ENCODE measurements at regions of chr5 and their contacts with region 1.

Region 1: DNA sequence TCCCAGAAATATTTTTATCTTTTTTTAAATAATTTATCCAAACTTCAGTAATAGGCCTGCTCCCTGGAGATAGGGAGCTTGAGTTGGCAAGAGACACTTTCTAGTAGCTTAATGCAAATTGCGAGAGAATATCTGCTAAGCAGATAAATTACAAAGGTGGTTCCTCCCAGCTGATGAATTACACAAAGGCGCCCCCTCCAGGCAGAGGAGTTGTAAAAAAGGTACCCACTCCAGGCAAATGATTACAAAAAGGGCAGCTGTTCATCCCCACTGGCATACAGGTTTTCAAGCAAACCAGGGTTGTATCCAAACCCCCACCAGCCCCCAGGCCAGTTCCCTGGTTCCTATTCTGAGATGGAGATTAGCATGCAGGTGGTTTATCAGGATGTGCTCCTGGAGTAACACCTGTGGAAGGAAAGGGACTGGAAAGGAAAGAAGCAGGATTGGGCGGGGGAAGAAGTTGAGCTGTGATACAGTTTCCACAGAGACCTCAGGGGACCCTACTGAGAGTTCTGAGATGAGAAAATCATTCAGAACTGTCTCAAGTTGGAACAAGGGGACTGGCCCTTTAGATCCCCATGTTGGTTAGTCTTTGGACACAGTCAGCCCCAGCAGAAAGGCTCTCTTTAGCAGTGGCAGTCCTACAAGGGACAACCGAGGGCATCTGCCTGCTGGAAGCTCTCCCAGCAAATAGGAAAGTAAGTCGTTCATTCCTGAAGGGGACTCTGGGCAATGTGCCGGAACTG is 25.5 kb downstream of the ESM1 start:
- DNase-seq: peak; percentile 7 to 76
- H3K4me3 ChIP-seq: no peak overlapping the region
- H3K27ac ChIP-seq: no peak overlapping the region
- H3K4me1 ChIP-seq: no peaks in the 10 kb centered on the region
- H3K27me3 ChIP-seq: no peaks in the 10 kb centered on the region
- CTCF ChIP-seq: peak; percentile 10 to 63 (median 57)
- EP300 ChIP-seq: no peak
- POLR2A ChIP-seq: no peak
- RAD21 ChIP-seq: peak; percentile 54 to 69

Region 2: GRCh38 chr5:54915466-54916027 is 44.3 kb before region 1 on chr5:
- CTCF ChIA-PET with region 1: interaction called, 16 read pairs
- POLR2A ChIA-PET with region 1: no interaction called
- DNase-seq: no peak
- H3K4me3 ChIP-seq: no peak overlapping the region
- H3K27ac ChIP-seq: no peak overlapping the region
- H3K4me1 ChIP-seq: no peaks in the 10 kb centered on the region
- H3K27me3 ChIP-seq: no peaks in the 10 kb centered on the region
- CTCF ChIP-seq: no peak
- EP300 ChIP-seq: no peak
- POLR2A ChIP-seq: no peak
- RAD21 ChIP-seq: no peak

Region 3: DNA sequence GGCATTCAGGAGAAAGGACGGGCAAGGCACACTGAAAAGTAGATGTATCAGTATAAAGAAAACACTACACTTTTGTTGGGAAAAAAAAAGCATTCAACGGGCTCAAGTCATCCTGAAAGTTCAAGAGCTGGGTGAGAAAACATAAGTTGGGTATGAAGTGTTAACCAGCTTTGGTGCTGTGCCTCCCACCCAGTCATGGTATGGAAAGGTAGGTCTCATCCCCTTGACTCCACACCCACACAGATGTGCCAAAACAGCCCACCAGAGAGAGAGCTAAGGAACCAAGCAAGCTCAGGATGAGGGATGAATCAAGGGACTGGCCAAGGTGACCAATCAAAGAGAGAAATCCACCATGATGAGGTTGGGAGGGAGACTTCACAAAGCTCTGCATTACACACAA is 29.1 kb before region 1 on chr5:
- CTCF ChIA-PET with region 1: interaction called, 22 read pairs
- POLR2A ChIA-PET with region 1: no interaction called
- DNase-seq: no peak
- H3K4me3 ChIP-seq: no peak overlapping the region
- H3K27ac ChIP-seq: no peak overlapping the region
- H3K4me1 ChIP-seq: no peaks in the 10 kb centered on the region
- H3K27me3 ChIP-seq: peaks cover 0 to 1% (median 0%) of the 10 kb centered on the region in 4 experiments; a peak in 1 of 7 replicates
- CTCF ChIP-seq: no peak
- EP300 ChIP-seq: no peak
- POLR2A ChIP-seq: no peak
- RAD21 ChIP-seq: no peak

Region 4: GRCh38 chr5:54944364-54944763 is 15.5 kb before region 1 on chr5:
- CTCF ChIA-PET with region 1: interaction called, 144 read pairs
- POLR2A ChIA-PET with region 1: no interaction called
- DNase-seq: no peak
- H3K4me3 ChIP-seq: no peak overlapping the region
- H3K27ac ChIP-seq: no peak overlapping the region
- H3K4me1 ChIP-seq: no peaks in the 10 kb centered on the region
- H3K27me3 ChIP-seq: no peaks in the 10 kb centered on the region
- CTCF ChIP-seq: peak in 2 of 3 experiments; percentile 24 to 51; a peak in 2 of 4 replicates
- EP300 ChIP-seq: no peak
- POLR2A ChIP-seq: no peak
- RAD21 ChIP-seq: peak; percentile 34 to 38; a peak in 3 of 4 replicates

Region 5: DNA sequence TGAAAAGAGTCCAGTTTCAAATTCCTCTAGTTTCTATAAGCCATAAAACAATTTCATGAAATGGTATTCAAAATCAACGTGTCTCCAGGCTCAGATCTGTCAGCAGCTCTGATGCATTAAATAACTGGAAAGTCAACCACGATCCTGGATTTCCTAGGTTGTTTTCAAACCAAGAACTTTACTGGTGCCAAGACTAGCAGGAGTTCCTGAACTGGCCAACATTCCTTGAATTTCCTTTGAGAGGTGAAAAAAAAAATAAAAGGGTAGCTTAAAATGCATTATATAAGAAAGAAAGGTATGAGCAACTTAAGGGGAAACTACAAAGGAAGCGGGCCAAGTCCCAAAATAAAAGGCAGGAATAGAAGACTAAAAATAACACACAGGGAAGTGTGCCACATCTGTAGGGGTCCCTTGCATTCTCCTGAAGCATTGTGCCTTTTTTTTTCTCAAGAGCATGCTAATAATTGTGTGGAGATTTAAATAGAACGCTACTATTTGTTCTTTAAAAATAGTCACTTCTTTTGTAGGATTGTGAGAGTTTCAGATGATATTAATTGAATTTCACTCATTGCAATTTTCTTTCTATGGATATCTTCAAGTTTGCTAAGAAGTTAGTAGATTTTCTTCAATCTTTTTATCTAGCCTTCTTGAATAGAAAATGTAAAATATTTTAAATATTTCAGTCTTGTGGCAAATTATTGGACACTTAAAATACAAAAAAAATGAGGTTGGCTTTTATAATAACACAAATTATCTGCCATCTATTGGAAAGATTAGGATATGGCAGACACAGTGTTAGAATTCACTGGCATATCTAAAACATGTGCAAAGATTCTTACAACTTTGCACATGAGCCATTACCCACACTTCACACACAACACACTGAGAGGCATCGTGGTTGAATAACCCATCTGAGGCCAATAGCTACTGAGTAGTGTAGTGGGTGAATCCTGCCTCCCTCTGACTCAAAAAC is 10.3 kb after region 1 on chr5:
- CTCF ChIA-PET with region 1: interaction called, 57 read pairs
- POLR2A ChIA-PET with region 1: no interaction called
- DNase-seq: no peak
- H3K4me3 ChIP-seq: no peak overlapping the region
- H3K27ac ChIP-seq: no peak overlapping the region
- H3K4me1 ChIP-seq: no peaks in the 10 kb centered on the region
- H3K27me3 ChIP-seq: no peaks in the 10 kb centered on the region
- CTCF ChIP-seq: no peak
- EP300 ChIP-seq: no peak
- POLR2A ChIP-seq: no peak
- RAD21 ChIP-seq: no peak

Region 6: DNA sequence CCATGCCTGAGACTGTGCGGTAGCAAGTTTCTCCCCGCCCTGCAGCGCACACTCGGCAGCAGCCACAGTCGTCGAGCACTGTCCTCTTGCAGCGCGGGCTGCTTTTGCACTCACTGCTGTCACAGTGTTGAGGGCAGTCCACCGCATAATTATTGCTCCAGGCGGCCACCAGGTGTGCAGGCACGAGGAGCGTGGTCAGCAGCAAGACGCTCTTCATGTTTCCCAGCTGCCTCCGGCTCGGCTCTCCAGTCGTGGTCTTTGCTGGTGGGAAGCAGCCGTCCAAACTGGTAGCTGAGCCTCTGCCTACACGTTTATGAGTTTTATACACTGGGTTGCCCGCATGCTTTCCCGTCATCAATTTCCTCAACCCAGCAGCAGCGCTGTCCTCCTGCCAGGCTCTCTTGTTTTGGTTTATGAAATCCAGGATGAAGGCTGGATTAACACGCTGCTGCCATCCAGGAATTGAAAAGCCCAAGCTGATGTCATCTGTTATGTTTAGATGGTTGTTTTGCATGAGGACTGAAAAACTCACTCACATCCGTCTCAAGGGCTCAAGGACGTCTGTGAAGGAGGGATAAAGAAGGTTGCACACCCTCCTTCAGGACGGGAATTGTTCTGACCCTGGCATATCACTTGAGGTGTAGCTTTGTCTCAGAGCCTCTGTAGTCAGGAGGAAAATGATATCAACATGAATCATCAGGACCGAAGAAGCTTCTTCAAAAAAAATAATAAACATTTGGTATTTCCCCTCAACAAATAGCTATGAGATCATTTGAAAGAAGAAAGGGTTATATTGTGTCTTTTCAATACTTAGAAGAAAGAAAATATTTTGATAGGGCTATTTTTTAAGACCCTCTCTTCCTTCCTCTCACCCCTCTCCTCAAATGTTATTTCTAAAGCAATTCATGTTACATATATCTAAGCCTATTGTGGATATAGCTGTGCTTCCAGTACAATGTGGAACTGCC is 25.7 kb after region 1 on chr5 and contains the start of gene ESM1:
- CTCF ChIA-PET with region 1: interaction called, 44 read pairs
- POLR2A ChIA-PET with region 1: no interaction called
- DNase-seq: no peak
- H3K4me3 ChIP-seq: no peak within 1 kb of the TSS
- H3K27ac ChIP-seq: no peak within 1 kb of the TSS
- H3K4me1 ChIP-seq: peaks cover 0 to 4% (median 2%) of the 10 kb centered on the region in 4 experiments; a peak in 4 of 7 replicates
- H3K27me3 ChIP-seq: no peaks in the 10 kb centered on the region
- CTCF ChIP-seq: no peak
- EP300 ChIP-seq: no peak
- POLR2A ChIP-seq: no peak
- RAD21 ChIP-seq: no peak
- total RNA-seq, gene ESM1: not detected in 2 replicates

Measured in H1 (cell line).